CD4-positive, alpha-beta T cell (primary cell): ENCODE measurements at regions of chr6 and their contacts with region 1.

Region 1: GRCh38 chr6:169212897-169213813 is 40.5 kb downstream of the THBS2 start:
- DNase-seq: peak; percentile 77 to 95 (median 85)
- ATAC-seq: peak; percentile 98
- H3K4me3 ChIP-seq: peak overlapping the region; percentile 35
- H3K4me3 Mint-ChIP-seq: peak overlapping the region; percentile 78
- H3K27ac ChIP-seq: no peak overlapping the region
- H3K27ac Mint-ChIP-seq: peak overlapping the region; percentile 79
- H3K4me1 ChIP-seq: peaks cover 12% of the 10 kb centered on the region
- H3K4me1 Mint-ChIP-seq: peaks cover 25% of the 10 kb centered on the region
- H3K27me3 ChIP-seq: no peaks in the 10 kb centered on the region
- H3K27me3 Mint-ChIP-seq: no peaks in the 10 kb centered on the region
- CTCF ChIP-seq: no peak

Region 2: GRCh38 chr6:168895102-168895812 is 317.9 kb before region 1 on chr6:
- CTCF ChIA-PET with region 1: no interaction called
- POLR2A ChIA-PET with region 1: no interaction called
- intact Hi-C with region 1: loop called in 1 of 2 experiments (anchors 5 kb)
- DNase-seq: peak; percentile 62 to 87 (median 74)
- ATAC-seq: peak; percentile 96
- H3K4me3 ChIP-seq: peak overlapping the region; percentile 28
- H3K4me3 Mint-ChIP-seq: peak overlapping the region; percentile 4
- H3K27ac ChIP-seq: no peak overlapping the region
- H3K27ac Mint-ChIP-seq: no peak overlapping the region
- H3K4me1 ChIP-seq: peaks cover 8% of the 10 kb centered on the region
- H3K4me1 Mint-ChIP-seq: peaks cover 15% of the 10 kb centered on the region
- H3K27me3 ChIP-seq: no peaks in the 10 kb centered on the region
- H3K27me3 Mint-ChIP-seq: no peaks in the 10 kb centered on the region
- CTCF ChIP-seq: peak; percentile 83

Region 3: DNA sequence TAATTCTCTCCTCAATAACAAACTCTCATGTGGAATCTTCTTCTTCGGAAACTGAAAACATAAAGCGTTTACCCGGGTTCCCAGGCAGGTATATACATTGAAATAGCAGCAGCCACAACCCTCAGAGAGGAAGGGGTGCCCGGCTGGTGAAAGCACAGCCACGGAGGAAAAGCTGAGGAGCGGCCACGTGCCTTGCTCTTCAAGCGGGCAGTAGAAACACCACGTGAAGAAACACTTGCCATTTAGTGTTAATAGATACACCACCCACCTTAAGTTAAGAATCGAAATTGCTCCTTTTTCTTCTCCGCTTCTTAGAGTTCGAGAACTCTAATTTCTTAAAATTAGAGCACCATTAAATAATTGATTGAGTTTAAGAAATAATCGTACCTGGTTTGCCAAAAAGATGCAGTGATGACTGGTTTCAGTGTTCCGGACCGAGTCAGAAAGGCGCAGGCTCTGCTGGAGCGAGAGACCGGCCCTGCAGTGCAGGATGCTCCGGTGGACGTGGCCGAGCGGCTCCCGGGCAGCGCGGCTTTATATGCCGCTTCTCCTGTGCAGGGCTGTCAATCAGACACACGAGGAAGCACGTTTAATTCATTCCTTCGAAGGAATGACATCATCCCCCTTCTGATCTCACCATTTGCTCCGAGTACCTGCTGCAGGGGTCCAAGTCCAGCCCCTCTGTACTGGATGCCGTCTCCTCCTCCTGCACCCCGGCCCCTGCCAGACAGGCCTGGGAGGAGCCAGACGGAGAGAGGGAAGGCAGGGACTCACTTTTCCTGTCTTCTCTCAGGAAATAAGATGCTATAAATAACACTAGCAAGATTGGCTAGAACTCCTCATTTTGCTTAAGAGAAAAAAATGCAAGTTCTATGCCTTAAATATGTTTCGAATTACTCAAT is 40.4 kb after region 1 on chr6 and contains the start of gene THBS2:
- CTCF ChIA-PET with region 1: no interaction called
- POLR2A ChIA-PET with region 1: no interaction called
- intact Hi-C with region 1: no loop called
- DNase-seq: no peak
- ATAC-seq: no peak
- H3K4me3 ChIP-seq: no peak within 1 kb of the TSS
- H3K4me3 Mint-ChIP-seq: peak within 1 kb of the TSS; percentile 2
- H3K27ac ChIP-seq: no peak within 1 kb of the TSS
- H3K27ac Mint-ChIP-seq: no peak within 1 kb of the TSS
- H3K4me1 ChIP-seq: peaks cover 7% of the 10 kb centered on the region
- H3K4me1 Mint-ChIP-seq: peaks cover 21% of the 10 kb centered on the region
- H3K27me3 ChIP-seq: peaks cover 41 to 46% of the 10 kb centered on the region in 2 experiments
- H3K27me3 Mint-ChIP-seq: peaks cover 84% of the 10 kb centered on the region
- CTCF ChIP-seq: no peak
- total RNA-seq, gene THBS2: not detected